MCF 10A (cell line): ENCODE measurements at regions of chr5 and their contacts with region 1.

Region 1: GRCh38 chr5:83473346-83474163 is 2.0 kb downstream of the VCAN start:
- DNase-seq: peak; percentile 98
- H3K4me3 Mint-ChIP-seq: peak overlapping the region; percentile 80
- H3K27ac Mint-ChIP-seq: peak overlapping the region; percentile 87
- H3K4me1 Mint-ChIP-seq: peaks cover 19% of the 10 kb centered on the region
- H3K27me3 Mint-ChIP-seq: peaks cover 23% of the 10 kb centered on the region
- CTCF ChIP-seq: peak; percentile 90

Region 2: GRCh38 chr5:82356808-82357671 is 1116.5 kb before region 1 on chr5:
- CTCF ChIA-PET with region 1: interaction called, 14 read pairs
- POLR2A ChIA-PET with region 1: interaction called, 4 read pairs
- intact Hi-C with region 1: loop called (anchors 1 kb)
- DNase-seq: peak; percentile 99
- H3K4me3 Mint-ChIP-seq: peak overlapping the region; percentile 55
- H3K27ac Mint-ChIP-seq: peak overlapping the region; percentile 84
- H3K4me1 Mint-ChIP-seq: peaks cover 49% of the 10 kb centered on the region
- H3K27me3 Mint-ChIP-seq: no peaks in the 10 kb centered on the region
- CTCF ChIP-seq: no peak

Region 3: DNA sequence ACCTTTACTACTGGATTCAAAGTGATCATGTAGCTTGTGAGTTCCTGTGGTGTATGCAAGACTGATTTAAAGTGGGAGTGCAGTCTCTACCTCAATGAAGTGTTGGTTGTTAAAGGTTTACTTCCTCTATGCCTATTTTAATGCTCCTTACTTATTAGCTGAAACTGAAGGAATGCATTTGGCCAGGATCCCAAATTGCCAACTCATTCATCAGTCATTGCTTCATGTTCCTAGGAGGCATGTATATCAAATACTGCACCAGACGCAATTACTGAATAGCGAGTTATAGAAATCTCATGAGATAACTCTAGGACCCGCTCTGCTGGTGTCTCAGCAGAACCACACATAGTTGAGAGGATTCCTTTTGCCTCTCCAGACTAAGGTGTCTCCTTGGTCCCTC is 1052.4 kb before region 1 on chr5:
- CTCF ChIA-PET with region 1: no interaction called
- POLR2A ChIA-PET with region 1: no interaction called
- intact Hi-C with region 1: loop called (anchors 1 kb)
- DNase-seq: peak; percentile 99
- H3K4me3 Mint-ChIP-seq: no peak overlapping the region
- H3K27ac Mint-ChIP-seq: no peak overlapping the region
- H3K4me1 Mint-ChIP-seq: peaks cover 51% of the 10 kb centered on the region
- H3K27me3 Mint-ChIP-seq: no peaks in the 10 kb centered on the region
- CTCF ChIP-seq: peak; percentile 49

Region 4: DNA sequence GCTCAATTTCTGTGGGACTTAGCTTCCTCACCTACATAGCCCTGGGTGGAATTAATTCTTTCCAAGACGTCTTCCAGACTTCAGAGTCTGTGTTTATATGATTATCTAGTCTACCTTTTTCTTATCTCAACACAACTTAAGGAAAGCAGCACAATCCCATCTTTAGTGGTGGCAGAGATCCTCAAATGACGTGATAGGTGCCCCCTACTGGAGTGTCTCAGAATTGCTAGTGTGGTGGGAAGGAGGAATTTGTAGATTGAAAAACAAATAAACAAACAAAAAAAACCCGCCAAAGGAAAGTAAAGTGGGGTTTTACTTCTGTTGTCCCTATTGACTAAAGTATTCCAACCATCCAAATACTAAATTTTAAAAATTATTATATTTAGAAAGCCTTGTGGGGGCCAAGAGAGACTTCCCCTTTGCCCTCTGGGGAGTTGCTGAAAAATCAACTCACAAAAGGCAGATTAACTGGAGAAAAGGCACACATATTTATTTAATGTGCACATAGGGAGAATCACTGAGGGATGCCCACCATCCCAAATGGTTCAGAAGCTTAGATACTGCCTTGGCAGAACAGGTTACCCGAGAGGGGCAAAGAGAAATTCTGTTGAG is 679.6 kb before region 1 on chr5:
- CTCF ChIA-PET with region 1: no interaction called
- POLR2A ChIA-PET with region 1: no interaction called
- intact Hi-C with region 1: loop called (anchors 5 kb)
- DNase-seq: peak; percentile 60
- H3K4me3 Mint-ChIP-seq: no peak overlapping the region
- H3K27ac Mint-ChIP-seq: no peak overlapping the region
- H3K4me1 Mint-ChIP-seq: no peaks in the 10 kb centered on the region
- H3K27me3 Mint-ChIP-seq: no peaks in the 10 kb centered on the region
- CTCF ChIP-seq: peak; percentile 68

Region 5: GRCh38 chr5:83049370-83049885 is 424.1 kb before region 1 on chr5:
- CTCF ChIA-PET with region 1: no interaction called
- POLR2A ChIA-PET with region 1: no interaction called
- intact Hi-C with region 1: loop called (anchors 5 kb)
- DNase-seq: no peak
- H3K4me3 Mint-ChIP-seq: no peak overlapping the region
- H3K27ac Mint-ChIP-seq: no peak overlapping the region
- H3K4me1 Mint-ChIP-seq: no peaks in the 10 kb centered on the region
- H3K27me3 Mint-ChIP-seq: no peaks in the 10 kb centered on the region
- CTCF ChIP-seq: no peak

Region 6: GRCh38 chr5:83368319-83368718 is 105.2 kb before region 1 on chr5:
- CTCF ChIA-PET with region 1: interaction called, 3 read pairs
- POLR2A ChIA-PET with region 1: no interaction called
- intact Hi-C with region 1: loop called (anchors 5 kb)
- DNase-seq: peak; percentile 90
- H3K4me3 Mint-ChIP-seq: no peak overlapping the region
- H3K27ac Mint-ChIP-seq: no peak overlapping the region
- H3K4me1 Mint-ChIP-seq: peaks cover 9% of the 10 kb centered on the region
- H3K27me3 Mint-ChIP-seq: no peaks in the 10 kb centered on the region
- CTCF ChIP-seq: no peak

Region 7: DNA sequence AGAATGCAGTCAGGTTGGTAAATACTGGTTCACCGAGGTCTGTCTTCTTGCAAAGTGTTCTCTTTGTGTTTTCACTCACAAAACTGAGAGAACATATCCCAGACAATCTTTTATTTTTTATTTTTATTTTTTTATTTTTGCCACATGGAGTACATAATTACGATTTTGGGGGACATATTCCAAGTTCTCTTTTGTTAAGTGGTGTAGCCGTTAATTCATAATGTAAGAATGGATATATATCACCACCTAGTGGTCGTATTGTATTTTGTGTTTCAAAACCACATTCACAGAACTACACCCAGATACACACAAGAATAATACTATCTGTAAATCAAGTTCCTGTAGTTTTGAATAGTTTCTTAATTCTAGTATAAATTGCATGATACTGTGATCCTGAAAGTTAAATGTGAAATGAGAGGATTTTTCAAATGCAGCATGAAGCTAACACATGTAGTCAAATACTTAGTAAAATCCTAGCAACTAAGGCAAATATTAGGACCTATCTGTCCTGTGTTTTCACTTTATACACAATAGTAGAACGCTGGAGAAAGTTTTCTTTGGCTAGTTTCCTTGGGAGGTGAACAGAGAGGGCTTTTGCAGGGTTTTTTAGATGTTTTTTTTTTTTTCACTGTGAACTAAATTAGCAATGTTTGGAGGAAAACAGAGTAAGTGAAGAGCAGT is 90.7 kb after region 1 on chr5:
- CTCF ChIA-PET with region 1: interaction called, 6 read pairs
- POLR2A ChIA-PET with region 1: interaction called, 6 read pairs
- intact Hi-C with region 1: loop called (anchors 1 kb)
- DNase-seq: peak; percentile 58
- H3K4me3 Mint-ChIP-seq: no peak overlapping the region
- H3K27ac Mint-ChIP-seq: no peak overlapping the region
- H3K4me1 Mint-ChIP-seq: peaks cover 27% of the 10 kb centered on the region
- H3K27me3 Mint-ChIP-seq: no peaks in the 10 kb centered on the region
- CTCF ChIP-seq: peak; percentile 51

Region 8: DNA sequence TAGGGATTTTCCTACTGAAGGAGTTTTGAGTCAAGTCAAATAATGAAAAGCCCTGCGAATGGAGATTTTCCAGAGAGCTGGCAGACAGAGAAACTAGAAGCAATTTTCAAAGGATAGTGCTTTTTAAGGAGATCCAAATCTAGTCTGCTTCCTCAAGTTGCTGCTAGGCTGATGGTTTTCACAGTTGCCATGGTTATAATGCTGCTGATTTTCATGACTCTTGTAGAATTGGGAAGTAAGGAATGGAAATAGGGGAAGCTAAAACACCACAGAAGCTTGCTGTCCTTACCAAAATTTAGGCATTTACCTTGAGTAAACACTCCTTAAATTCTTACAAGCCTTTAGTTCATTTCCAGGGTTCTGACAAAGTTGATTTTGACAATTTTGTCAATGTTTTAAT is 277.2 kb after region 1 on chr5:
- CTCF ChIA-PET with region 1: no interaction called
- POLR2A ChIA-PET with region 1: no interaction called
- intact Hi-C with region 1: no loop called
- DNase-seq: no peak
- H3K4me3 Mint-ChIP-seq: no peak overlapping the region
- H3K27ac Mint-ChIP-seq: no peak overlapping the region
- H3K4me1 Mint-ChIP-seq: no peaks in the 10 kb centered on the region
- H3K27me3 Mint-ChIP-seq: peaks cover 19% of the 10 kb centered on the region
- CTCF ChIP-seq: no peak